ENCODE measurements at regions of chr1 and their contacts with region 1.

Region 1: DNA sequence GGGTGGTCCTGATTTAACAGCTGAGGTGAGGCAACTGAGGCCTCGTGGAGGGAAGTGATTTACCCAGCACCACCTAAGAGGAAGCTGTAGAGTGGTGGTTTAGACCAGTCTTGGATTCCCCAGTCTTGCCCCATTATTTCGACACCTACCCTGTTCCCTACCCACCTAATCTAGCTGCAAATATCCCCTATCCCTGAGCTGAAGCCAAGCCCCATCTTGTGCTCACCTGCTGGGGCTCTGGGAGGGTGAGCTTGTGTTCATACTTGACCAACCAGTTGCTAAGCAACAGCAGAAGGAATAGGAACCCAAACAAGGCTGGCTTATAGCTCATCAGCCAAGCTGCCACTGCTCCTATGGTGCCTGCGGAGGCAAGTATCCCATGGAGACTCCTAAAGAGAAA is 2.0 kb downstream of the TEX46 start:
- DNase-seq: peak; percentile 26
- ATAC-seq: no peak
- H3K4me3 ChIP-seq: no peak overlapping the region
- H3K27ac ChIP-seq: no peak overlapping the region
- H3K4me1 ChIP-seq: peaks cover 28% of the 10 kb centered on the region
- H3K27me3 ChIP-seq: no peaks in the 10 kb centered on the region
- CTCF ChIP-seq: no peak

Region 2: GRCh38 chr1:22437573-22437972 is 576.1 kb before region 1 on chr1:
- CTCF ChIA-PET with region 1: no interaction called
- POLR2A ChIA-PET with region 1: no interaction called
- intact Hi-C with region 1: no loop called
- DNase-seq: no peak
- ATAC-seq: no peak
- H3K4me3 ChIP-seq: no peak overlapping the region
- H3K27ac ChIP-seq: no peak overlapping the region
- H3K4me1 ChIP-seq: no peaks in the 10 kb centered on the region
- H3K27me3 ChIP-seq: no peaks in the 10 kb centered on the region
- CTCF ChIP-seq: no peak

Region 3: GRCh38 chr1:22889213-22889827 is 124.3 kb before region 1 on chr1:
- CTCF ChIA-PET with region 1: no interaction called
- POLR2A ChIA-PET with region 1: no interaction called
- intact Hi-C with region 1: no loop called
- DNase-seq: peak; percentile 66
- ATAC-seq: peak; percentile 78
- H3K4me3 ChIP-seq: no peak overlapping the region
- H3K27ac ChIP-seq: no peak overlapping the region
- H3K4me1 ChIP-seq: peaks cover 7% of the 10 kb centered on the region; the same call in 1 of the 2 replicates
- H3K27me3 ChIP-seq: no peaks in the 10 kb centered on the region
- CTCF ChIP-seq: peak; percentile 95

Region 4: DNA sequence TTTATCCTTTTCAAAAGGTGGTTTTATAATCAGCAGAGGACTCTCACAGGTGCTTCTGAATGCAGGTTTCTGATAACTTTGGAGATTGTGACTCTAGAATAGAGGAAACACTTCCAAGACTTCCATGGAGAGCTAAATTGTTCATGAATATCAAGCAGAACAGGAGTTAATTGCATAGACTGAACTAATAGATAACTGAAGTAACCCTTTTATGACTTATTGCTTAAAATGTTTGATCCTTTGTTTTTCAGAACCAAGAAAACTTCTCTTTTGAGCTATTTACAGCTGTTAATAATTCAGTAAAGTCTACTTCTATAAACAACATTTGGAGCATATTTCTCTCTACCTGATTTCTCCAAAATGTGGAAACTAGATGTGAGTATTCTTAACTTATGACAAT is 17.9 kb before region 1 on chr1:
- CTCF ChIA-PET with region 1: no interaction called
- POLR2A ChIA-PET with region 1: no interaction called
- intact Hi-C with region 1: no loop called
- DNase-seq: no peak
- ATAC-seq: no peak
- H3K4me3 ChIP-seq: no peak overlapping the region
- H3K27ac ChIP-seq: no peak overlapping the region
- H3K4me1 ChIP-seq: no peaks in the 10 kb centered on the region
- H3K27me3 ChIP-seq: no peaks in the 10 kb centered on the region
- CTCF ChIP-seq: no peak

Region 5: GRCh38 chr1:23062271-23062670 is 48.6 kb after region 1 on chr1:
- CTCF ChIA-PET with region 1: no interaction called
- POLR2A ChIA-PET with region 1: interaction called, 22 read pairs
- intact Hi-C with region 1: no loop called
- DNase-seq: no peak
- ATAC-seq: no peak
- H3K4me3 ChIP-seq: no peak overlapping the region
- H3K27ac ChIP-seq: no peak overlapping the region
- H3K4me1 ChIP-seq: no peaks in the 10 kb centered on the region
- H3K27me3 ChIP-seq: no peaks in the 10 kb centered on the region
- CTCF ChIP-seq: no peak

Region 6: DNA sequence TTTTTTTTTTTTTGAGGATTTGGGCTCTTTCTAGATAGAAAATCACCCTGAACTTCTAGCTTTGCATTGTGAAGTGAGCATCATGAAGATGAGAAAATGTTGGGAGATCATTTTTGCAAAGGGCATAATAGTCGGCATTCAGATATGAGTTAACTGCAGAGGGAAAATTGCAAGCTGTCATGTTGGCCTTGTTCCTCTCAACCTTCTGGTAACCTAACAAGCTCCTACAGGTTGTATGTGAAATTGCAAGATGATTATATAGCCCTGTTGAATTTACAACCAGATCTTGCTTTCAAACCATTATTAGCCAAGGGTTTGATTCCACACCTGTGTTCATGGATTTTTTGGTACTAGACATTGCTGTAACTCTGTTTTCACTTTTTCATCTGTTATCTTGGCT is 731.9 kb after region 1 on chr1:
- CTCF ChIA-PET with region 1: interaction called, 12 read pairs
- POLR2A ChIA-PET with region 1: no interaction called
- intact Hi-C with region 1: no loop called
- DNase-seq: peak; percentile 52
- ATAC-seq: no peak
- H3K4me3 ChIP-seq: peak overlapping the region; percentile 88
- H3K27ac ChIP-seq: no peak overlapping the region
- H3K4me1 ChIP-seq: peaks cover 18% of the 10 kb centered on the region
- H3K27me3 ChIP-seq: no peaks in the 10 kb centered on the region
- CTCF ChIP-seq: peak; percentile 47

Measured in PC-3 (cell line).